Activated CD4-positive, alpha-beta T cell treated with anti-CD3 and anti-CD28 coated beads, Interleukin-2, amount 10 ng/mL, durations not matched to agents 7 days and 5 days (primary cell): ENCODE measurements at regions of chr15 and their contacts with region 1.

Region 1: DNA sequence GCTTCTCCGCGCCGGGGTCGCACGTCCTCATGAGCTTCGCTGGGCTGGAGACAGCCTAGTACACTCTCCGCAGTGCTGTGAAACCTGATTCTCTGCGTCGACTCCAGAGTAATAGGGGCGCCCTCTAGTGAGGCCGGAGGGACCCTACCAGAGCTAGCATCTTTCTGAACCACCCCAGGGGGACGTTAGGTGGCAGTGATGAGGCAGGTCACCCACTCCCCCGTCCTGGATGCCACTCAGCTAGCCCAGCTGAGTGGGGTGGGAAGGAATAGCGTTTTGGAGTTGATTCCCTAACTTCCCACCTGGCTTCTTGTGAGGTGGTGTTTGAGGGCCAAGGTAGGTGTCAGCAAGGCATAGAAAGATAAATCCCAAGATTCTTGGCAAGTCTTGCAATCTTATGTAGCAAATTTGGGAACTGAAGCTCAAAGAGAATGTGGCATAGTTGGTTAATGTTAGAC is 4.0 kb downstream of the DUOXA2 start:
- DNase-seq: peak; percentile 89
- H3K4me3 Mint-ChIP-seq: no peak overlapping the region
- H3K27ac Mint-ChIP-seq: no peak overlapping the region
- H3K4me1 Mint-ChIP-seq: peaks cover 23% of the 10 kb centered on the region
- H3K27me3 Mint-ChIP-seq: peaks cover 58% of the 10 kb centered on the region

Region 2: DNA sequence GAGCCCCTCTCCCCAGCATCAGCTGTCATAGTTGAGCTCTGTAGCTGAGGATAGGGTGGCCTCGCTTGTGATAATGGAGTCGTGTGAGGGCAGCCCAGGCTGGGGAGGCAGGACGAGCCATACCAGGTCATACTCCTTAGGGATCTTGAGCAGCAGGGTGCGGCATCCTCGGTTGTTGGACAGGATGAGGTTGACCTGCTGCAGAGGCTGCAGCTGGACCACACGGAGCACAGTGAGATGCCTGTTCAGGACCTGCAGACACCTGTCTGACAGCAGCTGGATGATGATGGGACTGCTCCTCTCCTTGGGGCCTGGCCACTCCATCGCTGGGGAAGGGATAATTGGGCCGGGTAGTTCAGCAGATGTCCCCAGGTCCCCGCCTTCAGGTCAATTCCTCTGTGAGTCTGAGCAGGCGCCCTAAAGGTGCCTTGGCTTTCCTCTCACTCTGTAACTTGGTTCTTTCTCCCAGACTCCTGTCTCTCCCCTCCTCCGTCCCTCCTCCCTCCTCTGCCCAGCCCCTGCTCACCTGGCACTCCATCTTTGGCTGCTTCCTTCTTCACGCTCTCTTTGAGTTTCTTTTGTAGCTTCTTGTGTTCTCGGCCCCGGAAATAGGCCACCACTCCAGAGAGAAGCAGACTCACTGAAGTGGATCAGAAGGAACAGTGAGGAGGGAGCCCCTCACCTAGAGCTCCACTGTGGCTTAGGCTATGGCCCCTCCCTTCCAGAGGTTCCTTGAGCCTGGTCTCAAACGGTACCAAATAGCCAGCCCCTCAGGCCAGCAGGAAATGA is 12.0 kb before region 1 on chr15:
- CTCF ChIA-PET with region 1: interaction called, 19 read pairs
- POLR2A ChIA-PET with region 1: no interaction called
- DNase-seq: no peak
- H3K4me3 Mint-ChIP-seq: no peak overlapping the region
- H3K27ac Mint-ChIP-seq: no peak overlapping the region
- H3K4me1 Mint-ChIP-seq: no peaks in the 10 kb centered on the region
- H3K27me3 Mint-ChIP-seq: peaks cover 25% of the 10 kb centered on the region

Region 3: GRCh38 chr15:45129651-45130191 is 11.6 kb after region 1 on chr15 and contains the starts of genes DUOX1 and DUOXA1:
- CTCF ChIA-PET with region 1: interaction called, 18 read pairs
- POLR2A ChIA-PET with region 1: no interaction called
- DNase-seq: peak; percentile 30
- H3K4me3 Mint-ChIP-seq: no peak within 1 kb of the TSS
- H3K27ac Mint-ChIP-seq: no peak within 1 kb of the TSS
- H3K4me1 Mint-ChIP-seq: peaks cover 9% of the 10 kb centered on the region
- H3K27me3 Mint-ChIP-seq: peaks cover 85% of the 10 kb centered on the region
- total RNA-seq, gene DUOX1: not detected
- total RNA-seq, gene DUOXA1: not detected